Activated T-helper 1 cell treated with anti-CD3 and anti-CD28 coated beads, Interleukin-12 subunit alpha, Interleukin-12 subunit beta, Interleukin-2, Interleukin-4 antibody, amounts not matched to agents 30 ng/mL and 10 ng/mL and 1 ng/mL, durations not matched to agents 14 hours and 24 hours and 36 hours (primary cell): ENCODE measurements at regions of chr20 and their contacts with region 1.

Region 1: GRCh38 chr20:43537921-43538877 is 20.6 kb upstream of the SGK2 start:
- DNase-seq: peak; percentile 18
- H3K4me3 Mint-ChIP-seq: no peak overlapping the region
- H3K27ac Mint-ChIP-seq: no peak overlapping the region
- H3K4me1 Mint-ChIP-seq: no peaks in the 10 kb centered on the region
- H3K27me3 Mint-ChIP-seq: no peaks in the 10 kb centered on the region

Region 2: GRCh38 chr20:43691928-43692524 is 153.8 kb after region 1 on chr20:
- intact Hi-C with region 1: loop called (anchors 1 kb)
- DNase-seq: peak; percentile 29
- H3K4me3 Mint-ChIP-seq: no peak overlapping the region
- H3K27ac Mint-ChIP-seq: no peak overlapping the region
- H3K4me1 Mint-ChIP-seq: peaks cover 11% of the 10 kb centered on the region
- H3K27me3 Mint-ChIP-seq: no peaks in the 10 kb centered on the region

Region 3: DNA sequence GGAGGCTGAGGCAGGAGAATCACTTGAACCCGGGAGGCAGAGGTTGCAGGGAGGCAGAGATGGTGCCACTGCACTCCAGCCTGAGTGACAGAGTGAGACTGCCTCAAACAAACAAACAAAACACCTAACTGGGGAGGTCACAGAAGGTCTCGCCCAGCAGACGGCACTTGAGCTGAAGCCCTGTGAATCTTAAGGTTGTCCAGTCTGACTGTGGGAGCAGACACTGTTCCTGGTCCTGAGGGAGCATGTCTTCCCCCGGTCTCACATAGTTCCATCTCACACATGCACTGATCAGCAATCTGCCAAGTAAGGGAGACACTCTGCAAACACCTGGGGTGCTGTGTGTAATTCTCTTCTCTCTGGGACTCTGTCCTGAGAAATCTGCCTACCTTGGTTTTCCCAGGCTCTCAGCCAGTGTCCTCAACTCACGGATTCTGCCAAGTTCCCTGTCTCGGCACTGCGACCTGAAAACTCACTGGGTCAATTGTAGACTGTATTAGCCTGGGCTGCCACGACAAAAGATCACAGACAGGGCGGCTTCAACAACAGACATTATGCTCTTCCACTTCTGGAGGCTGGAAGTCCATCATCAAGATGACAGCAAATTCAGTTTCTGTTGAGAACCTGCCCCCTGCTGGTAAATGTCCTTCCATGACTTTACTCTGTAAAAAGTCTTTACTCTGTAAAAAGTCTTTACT is 554.5 kb after region 1 on chr20:
- intact Hi-C with region 1: loop called (anchors 1 kb)
- DNase-seq: no peak
- H3K4me3 Mint-ChIP-seq: no peak overlapping the region
- H3K27ac Mint-ChIP-seq: peak overlapping the region; percentile 9
- H3K4me1 Mint-ChIP-seq: peaks cover 4% of the 10 kb centered on the region
- H3K27me3 Mint-ChIP-seq: peaks cover 2% of the 10 kb centered on the region